Right ventricle myocardium inferior (tissue), 1 donor: ENCODE measurements at regions of chr11 and their contacts with region 1.

Region 1: GRCh38 chr11:83819933-83820549 is 533.9 kb upstream of the CCDC90B start:
- DNase-seq: no peak
- ATAC-seq: no peak

Region 2: DNA sequence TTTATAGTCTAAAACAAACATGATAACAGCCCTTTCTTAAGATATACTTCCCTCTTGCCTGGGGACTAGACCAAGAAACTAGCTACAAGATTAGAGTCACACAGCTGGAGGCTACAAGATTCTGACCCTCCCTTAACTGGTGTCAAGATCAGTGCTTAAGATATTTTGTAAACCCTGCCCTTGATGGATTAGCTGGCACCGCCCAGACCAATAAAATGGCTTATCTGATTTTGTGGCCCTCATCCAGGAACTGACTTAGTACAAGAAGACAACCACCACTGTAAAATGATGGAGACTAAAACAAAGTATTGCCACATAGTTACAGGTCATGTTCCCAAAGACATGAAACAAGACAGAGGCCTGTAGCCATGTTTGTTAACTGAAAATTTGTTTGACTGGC is 1139.8 kb before region 1 on chr11:
- intact Hi-C with region 1: loop called (anchors 2 kb)
- DNase-seq: no peak
- ATAC-seq: no peak

Region 3: GRCh38 chr11:83241291-83241946 is 578.6 kb before region 1 on chr11:
- intact Hi-C with region 1: loop called (anchors 2 kb)
- DNase-seq: no peak
- ATAC-seq: peak; percentile 68

Region 4: DNA sequence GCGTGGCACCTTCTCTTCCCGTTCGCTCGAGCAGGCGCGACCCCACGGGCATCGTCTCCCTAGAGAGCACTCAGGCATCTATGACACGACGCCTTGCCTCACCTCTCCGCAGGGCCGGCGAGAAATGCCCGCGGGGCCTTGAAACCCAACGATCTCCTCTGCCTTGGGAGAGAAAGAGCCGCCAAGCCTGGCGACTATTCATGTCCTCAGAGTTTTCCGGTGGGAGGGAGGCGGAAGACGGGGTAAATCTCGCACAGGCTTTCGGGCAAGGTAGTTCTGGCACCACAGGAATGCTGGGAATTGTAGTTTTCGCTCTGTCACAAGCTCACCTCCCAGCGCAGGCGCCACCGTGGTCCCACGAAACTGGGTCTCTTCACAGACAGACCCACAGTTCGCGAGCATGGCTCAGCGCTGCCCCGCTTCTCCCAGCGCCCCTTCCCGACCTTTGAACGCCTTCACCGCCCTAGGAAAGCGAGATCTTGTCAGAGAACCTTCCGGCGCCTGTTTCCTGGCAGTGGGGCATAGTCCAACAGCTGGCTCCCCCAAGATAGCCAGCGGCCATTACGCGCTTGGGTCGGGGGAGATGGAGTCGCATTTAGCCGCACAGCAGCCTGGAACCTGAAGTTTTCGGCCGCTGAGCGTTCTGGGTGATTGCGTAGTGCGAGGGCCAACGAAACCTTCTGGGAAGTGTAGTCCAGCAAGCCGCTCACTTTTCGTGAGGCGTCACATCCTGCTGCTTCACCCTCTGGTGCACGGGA is 534.1 kb before region 1 on chr11 and contains the start of gene CCDC90B:
- intact Hi-C with region 1: loop called (anchors 2 kb)
- DNase-seq: peak; percentile 96
- ATAC-seq: peak; percentile 98
- total RNA-seq, gene CCDC90B: 21.2 TPM

Region 5: DNA sequence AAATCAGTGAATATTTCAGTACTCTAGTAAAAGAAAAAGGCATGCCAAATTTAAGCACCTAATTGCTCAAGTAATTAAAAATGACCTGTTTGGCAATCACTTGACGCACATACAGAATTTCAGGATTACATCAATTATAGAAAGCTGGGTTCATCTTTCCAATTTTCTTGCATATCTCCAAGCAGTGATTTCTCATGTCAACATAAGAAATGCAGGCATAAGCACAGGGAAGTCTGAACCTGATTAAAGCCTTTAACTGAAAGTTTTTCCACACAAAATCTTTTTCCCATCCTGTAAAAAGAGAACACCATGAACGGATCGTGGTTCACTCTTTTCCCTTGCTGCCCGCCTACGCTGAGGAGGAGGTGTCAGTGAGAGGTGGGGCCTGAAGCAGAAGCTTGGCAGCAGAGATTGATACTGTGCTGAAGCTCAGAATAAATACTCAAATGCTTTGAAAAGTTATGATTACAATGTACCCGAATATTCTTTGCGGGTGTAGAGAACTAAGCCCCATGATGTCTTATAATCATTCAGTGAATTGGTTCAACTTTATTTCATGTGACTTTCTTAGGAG is 170.2 kb after region 1 on chr11:
- intact Hi-C with region 1: no loop called
- DNase-seq: peak; percentile 67
- ATAC-seq: peak; percentile 73